CD4-positive, alpha-beta T cell (primary cell): ENCODE measurements at regions of chr19 and their contacts with region 1.

Region 1: GRCh38 chr19:46821498-46822409 is 28.9 kb downstream of the AP2S1 start:
- DNase-seq: peak; percentile 33 to 83 (median 52)
- ATAC-seq: peak; percentile 91
- H3K4me3 ChIP-seq: peak overlapping the region; percentile 13
- H3K4me3 Mint-ChIP-seq: peak overlapping the region; percentile 30
- H3K27ac ChIP-seq: peak overlapping the region; percentile 51 to 74
- H3K27ac Mint-ChIP-seq: peak overlapping the region; percentile 83
- H3K4me1 ChIP-seq: peaks cover 35% of the 10 kb centered on the region
- H3K4me1 Mint-ChIP-seq: peaks cover 26% of the 10 kb centered on the region
- H3K27me3 ChIP-seq: no peaks in the 10 kb centered on the region
- H3K27me3 Mint-ChIP-seq: no peaks in the 10 kb centered on the region
- CTCF ChIP-seq: no peak

Region 2: DNA sequence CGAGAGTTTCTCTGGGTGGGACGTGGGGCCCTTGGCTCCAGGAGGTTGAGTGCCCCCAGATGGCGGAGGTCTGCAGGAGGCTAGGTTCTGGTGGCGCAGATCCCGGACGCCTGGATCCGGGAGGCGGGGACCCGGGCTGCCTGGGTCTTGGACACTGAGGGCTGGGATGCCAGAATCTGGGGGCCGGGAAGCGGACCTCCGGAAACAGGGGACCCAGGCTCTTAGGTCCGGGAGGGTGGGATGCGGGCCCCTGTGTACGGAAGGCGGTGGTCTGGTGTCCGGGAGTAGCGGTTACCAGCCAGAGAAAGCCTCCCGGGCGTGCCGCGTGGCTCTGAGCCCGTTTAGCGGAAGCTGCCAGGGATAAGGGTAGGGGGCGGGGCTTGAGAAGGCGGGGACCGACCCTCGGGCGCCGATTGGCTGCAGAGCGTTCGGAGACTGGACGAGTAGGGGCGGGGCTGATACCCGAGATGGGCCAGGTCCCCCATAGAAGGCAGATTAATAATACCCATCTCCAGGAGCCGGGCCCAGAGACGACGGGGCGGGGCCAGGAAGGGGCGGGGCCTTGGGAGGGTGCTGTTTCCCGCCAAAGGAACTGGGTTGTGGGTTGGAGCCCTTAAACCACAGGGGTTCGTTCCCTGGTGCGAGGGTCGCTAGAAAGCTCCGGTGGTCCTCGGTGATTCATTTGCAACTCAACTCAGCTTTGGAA is 33.3 kb before region 1 on chr19 and contains the start of gene SLC1A5:
- CTCF ChIA-PET with region 1: no interaction called
- POLR2A ChIA-PET with region 1: interaction called, 9 read pairs
- intact Hi-C with region 1: loop called in 1 of 2 experiments (anchors 5 kb)
- DNase-seq: peak; percentile 90 to 99 (median 94)
- ATAC-seq: peak; percentile 80
- H3K4me3 ChIP-seq: peak within 1 kb of the TSS; percentile 76
- H3K4me3 Mint-ChIP-seq: peak within 1 kb of the TSS; percentile 93
- H3K27ac ChIP-seq: peak within 1 kb of the TSS; percentile 44 to 72
- H3K27ac Mint-ChIP-seq: peak within 1 kb of the TSS; percentile 86
- H3K4me1 ChIP-seq: peaks cover 71% of the 10 kb centered on the region
- H3K4me1 Mint-ChIP-seq: peaks cover 62% of the 10 kb centered on the region
- H3K27me3 ChIP-seq: no peaks in the 10 kb centered on the region
- H3K27me3 Mint-ChIP-seq: no peaks in the 10 kb centered on the region
- CTCF ChIP-seq: no peak
- total RNA-seq, gene SLC1A5: 7.1 TPM

Region 3: DNA sequence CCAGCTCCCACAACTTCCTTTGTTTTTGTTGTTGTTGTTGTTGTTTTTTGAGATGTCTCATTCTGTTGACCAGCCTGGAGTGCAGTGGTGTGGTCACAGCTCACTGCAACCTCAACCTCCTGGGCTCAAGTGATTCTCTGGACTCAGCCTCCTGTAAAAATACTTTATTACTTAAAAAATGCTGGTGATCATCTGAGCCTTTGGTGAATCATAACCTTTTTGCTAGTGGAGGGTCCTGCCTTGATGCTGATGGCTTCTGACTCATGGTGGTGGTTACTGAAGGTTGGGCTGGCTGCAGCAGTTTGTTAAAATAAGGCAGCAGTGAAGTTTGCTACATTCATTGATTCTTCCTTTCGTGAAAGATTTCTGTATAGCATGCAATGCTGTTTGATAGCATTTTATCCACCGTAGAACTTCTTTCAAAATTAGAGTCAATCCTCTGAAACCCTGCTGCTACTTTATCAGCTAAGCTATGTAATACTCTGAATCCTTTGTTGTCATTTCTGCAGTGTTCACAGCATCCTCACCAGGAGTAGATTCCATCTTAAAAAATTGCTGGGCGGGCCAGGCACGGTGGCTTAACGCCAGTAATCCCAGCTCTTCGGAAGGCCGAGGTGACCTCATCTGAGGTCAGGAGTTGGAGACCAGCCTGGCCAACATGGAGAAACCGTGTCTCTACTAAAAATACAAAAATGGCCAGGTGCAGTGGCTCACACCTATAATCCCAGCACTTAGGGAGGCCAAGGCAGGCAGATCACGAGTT is 57.0 kb after region 1 on chr19:
- CTCF ChIA-PET with region 1: no interaction called
- POLR2A ChIA-PET with region 1: no interaction called
- intact Hi-C with region 1: no loop called
- DNase-seq: no peak
- ATAC-seq: no peak
- H3K4me3 ChIP-seq: no peak overlapping the region
- H3K4me3 Mint-ChIP-seq: no peak overlapping the region
- H3K27ac ChIP-seq: no peak overlapping the region
- H3K27ac Mint-ChIP-seq: no peak overlapping the region
- H3K4me1 ChIP-seq: no peaks in the 10 kb centered on the region
- H3K4me1 Mint-ChIP-seq: peaks cover 7% of the 10 kb centered on the region
- H3K27me3 ChIP-seq: no peaks in the 10 kb centered on the region
- H3K27me3 Mint-ChIP-seq: no peaks in the 10 kb centered on the region
- CTCF ChIP-seq: no peak

Region 4: DNA sequence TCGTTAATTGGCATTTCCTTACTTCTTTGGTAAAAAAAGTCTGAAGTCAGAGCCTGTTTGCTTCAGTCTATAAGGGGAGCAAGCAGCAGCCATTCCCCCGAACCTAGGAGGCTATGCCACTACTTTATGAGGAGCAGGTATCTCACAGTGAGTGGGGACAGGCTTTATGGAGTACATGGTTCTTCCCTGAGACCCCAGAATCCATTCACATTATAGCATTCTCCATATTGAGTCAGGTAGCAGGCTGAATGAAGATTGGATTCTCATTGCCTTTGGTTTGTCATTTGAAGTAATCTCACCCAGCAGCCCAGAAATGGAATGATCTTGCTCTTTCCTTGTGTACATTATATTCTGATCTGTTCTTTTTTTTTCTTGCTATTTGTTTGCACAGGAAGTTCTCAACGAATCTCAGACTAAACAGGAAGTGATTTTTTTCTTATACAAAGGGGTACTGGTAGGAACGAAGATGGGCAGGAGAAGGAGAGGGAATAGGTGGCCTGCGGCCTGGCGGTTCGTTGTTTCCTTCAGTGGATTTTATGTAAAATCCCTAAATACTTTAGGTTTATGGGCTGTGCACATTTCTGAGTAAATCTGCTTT is 113.4 kb after region 1 on chr19:
- CTCF ChIA-PET with region 1: no interaction called
- POLR2A ChIA-PET with region 1: no interaction called
- intact Hi-C with region 1: no loop called
- DNase-seq: peak in 4 of 14 experiments; percentile 29 to 74 (median 50)
- ATAC-seq: peak; percentile 83
- H3K4me3 ChIP-seq: peak overlapping the region; percentile 2
- H3K4me3 Mint-ChIP-seq: peak overlapping the region; percentile 42
- H3K27ac ChIP-seq: peak overlapping the region; percentile 46 to 56
- H3K27ac Mint-ChIP-seq: peak overlapping the region; percentile 83
- H3K4me1 ChIP-seq: peaks cover 69% of the 10 kb centered on the region
- H3K4me1 Mint-ChIP-seq: peaks cover 65% of the 10 kb centered on the region
- H3K27me3 ChIP-seq: no peaks in the 10 kb centered on the region
- H3K27me3 Mint-ChIP-seq: no peaks in the 10 kb centered on the region
- CTCF ChIP-seq: no peak